CD4-positive, alpha-beta T cell (primary cell): ENCODE measurements at regions of chr12 and their contacts with region 1.

Region 1: DNA sequence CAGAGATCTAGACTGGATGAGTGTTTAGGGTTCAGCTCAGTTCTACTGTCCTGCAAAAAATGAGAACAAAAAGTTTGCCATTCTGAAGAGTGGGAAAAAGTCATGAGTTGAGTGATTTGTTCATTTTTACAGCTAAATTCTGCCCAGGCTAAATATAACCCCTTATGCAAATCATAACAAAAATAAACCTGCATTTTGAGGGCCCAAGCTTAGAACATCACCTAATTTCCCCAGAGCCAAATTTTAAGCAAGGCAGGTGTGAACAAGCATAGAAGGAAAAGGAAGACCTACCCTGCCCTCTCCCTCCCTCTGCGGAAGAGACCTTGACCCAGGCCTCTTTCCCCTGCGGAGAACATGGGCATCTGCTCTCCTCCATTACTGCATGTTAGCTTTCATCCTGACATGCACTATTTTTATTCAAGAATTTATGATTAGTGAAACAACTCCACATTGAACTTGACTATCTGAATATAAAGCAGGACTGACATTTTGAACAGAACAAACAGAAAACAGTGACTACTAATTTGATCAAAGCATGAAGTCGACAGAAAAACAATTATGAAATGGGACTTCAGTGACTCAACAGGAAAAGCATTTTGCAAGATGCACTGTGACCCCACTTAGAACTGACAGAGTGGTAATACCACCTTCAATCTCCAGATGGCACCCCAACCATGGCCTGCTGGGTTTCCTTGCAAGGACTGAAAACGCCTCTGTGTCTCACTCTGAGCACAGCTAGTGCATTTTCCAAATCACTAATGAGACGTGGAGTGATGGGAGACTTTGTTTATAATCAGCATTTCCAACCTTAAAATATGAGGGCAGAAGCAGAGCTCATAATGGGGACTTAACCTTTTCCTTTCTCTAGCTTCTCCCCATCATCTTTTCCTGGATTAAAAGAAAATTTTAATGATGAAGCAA is 30.9 kb upstream of the SELPLG start:
- DNase-seq: peak; percentile 69 to 90 (median 79)
- ATAC-seq: peak; percentile 100
- H3K4me3 ChIP-seq: no peak overlapping the region
- H3K4me3 Mint-ChIP-seq: no peak overlapping the region
- H3K27ac ChIP-seq: no peak overlapping the region
- H3K27ac Mint-ChIP-seq: peak overlapping the region; percentile 72
- H3K4me1 ChIP-seq: peaks cover 6% of the 10 kb centered on the region
- H3K4me1 Mint-ChIP-seq: peaks cover 7% of the 10 kb centered on the region
- H3K27me3 ChIP-seq: no peaks in the 10 kb centered on the region
- H3K27me3 Mint-ChIP-seq: no peaks in the 10 kb centered on the region
- CTCF ChIP-seq: peak; percentile 91

Region 2: DNA sequence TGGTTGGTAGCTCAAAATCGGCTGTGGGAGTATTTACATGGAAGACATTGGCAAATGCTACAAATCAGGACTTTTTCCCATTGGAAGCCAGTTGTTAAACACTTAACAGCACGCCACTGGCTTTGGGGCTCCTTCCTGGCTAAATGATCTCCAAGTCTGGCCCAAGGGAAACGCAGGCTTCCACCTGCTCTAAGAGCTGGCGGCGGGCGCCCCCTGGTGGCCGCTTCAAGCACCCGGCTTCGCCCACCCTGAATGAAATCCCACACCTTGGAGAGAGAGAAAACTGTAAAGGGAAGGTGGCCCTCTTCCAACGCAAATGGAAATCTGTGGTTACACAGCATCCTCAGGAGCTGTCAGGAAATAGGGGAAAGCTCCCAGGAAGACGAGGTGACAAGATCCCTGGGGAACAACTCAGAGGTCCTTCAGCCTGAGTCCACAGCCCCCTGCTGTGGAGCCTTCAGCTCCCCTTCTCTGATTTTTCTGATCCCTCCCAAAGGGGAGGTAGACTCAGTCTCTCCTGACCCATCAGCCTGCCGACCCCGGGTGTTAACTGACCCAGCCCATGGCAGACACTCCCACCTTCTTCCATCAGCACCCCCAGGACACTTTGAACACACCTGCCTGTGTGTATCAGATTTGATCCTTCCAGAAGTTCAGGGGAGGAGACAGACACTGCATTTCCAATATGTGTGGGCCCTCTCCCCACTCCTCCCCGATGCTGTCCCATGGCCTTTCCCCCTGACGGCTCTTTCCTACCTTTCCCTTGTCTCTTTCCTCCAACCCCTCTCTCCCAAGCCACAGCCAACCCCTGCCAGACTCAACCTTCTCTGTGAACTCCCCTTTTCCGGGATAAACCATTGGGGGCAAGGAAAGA is 46.3 kb before region 1 on chr12:
- CTCF ChIA-PET with region 1: interaction called, 27 read pairs
- POLR2A ChIA-PET with region 1: interaction called, 12 read pairs
- intact Hi-C with region 1: no loop called
- DNase-seq: peak; percentile 61 to 89 (median 72)
- ATAC-seq: peak; percentile 54
- H3K4me3 ChIP-seq: no peak overlapping the region
- H3K4me3 Mint-ChIP-seq: peak overlapping the region; percentile 30
- H3K27ac ChIP-seq: peak overlapping the region; percentile 49 to 80
- H3K27ac Mint-ChIP-seq: peak overlapping the region; percentile 84
- H3K4me1 ChIP-seq: peaks cover 63% of the 10 kb centered on the region
- H3K4me1 Mint-ChIP-seq: peaks cover 59% of the 10 kb centered on the region
- H3K27me3 ChIP-seq: no peaks in the 10 kb centered on the region
- H3K27me3 Mint-ChIP-seq: no peaks in the 10 kb centered on the region
- CTCF ChIP-seq: peak; percentile 98

Region 3: GRCh38 chr12:108643941-108644810 is 20.4 kb before region 1 on chr12:
- CTCF ChIA-PET with region 1: interaction called, 10 read pairs
- POLR2A ChIA-PET with region 1: interaction called, 8 read pairs
- intact Hi-C with region 1: no loop called
- DNase-seq: no peak
- ATAC-seq: no peak
- H3K4me3 ChIP-seq: no peak overlapping the region
- H3K4me3 Mint-ChIP-seq: no peak overlapping the region
- H3K27ac ChIP-seq: no peak overlapping the region
- H3K27ac Mint-ChIP-seq: no peak overlapping the region
- H3K4me1 ChIP-seq: peaks cover 36% of the 10 kb centered on the region
- H3K4me1 Mint-ChIP-seq: peaks cover 31% of the 10 kb centered on the region
- H3K27me3 ChIP-seq: no peaks in the 10 kb centered on the region
- H3K27me3 Mint-ChIP-seq: no peaks in the 10 kb centered on the region
- CTCF ChIP-seq: no peak

Region 4: GRCh38 chr12:108691175-108691997 is 26.8 kb after region 1 on chr12:
- CTCF ChIA-PET with region 1: interaction called, 11 read pairs
- POLR2A ChIA-PET with region 1: interaction called, 3 read pairs
- intact Hi-C with region 1: no loop called
- DNase-seq: peak; percentile 17 to 87 (median 58)
- ATAC-seq: peak; percentile 74
- H3K4me3 ChIP-seq: peak overlapping the region; percentile 32
- H3K4me3 Mint-ChIP-seq: peak overlapping the region; percentile 70
- H3K27ac ChIP-seq: peak overlapping the region in 1 of 2 donors; percentile 50
- H3K27ac Mint-ChIP-seq: peak overlapping the region; percentile 77
- H3K4me1 ChIP-seq: peaks cover 41% of the 10 kb centered on the region
- H3K4me1 Mint-ChIP-seq: peaks cover 58% of the 10 kb centered on the region
- H3K27me3 ChIP-seq: no peaks in the 10 kb centered on the region
- H3K27me3 Mint-ChIP-seq: no peaks in the 10 kb centered on the region
- CTCF ChIP-seq: no peak

Region 5: DNA sequence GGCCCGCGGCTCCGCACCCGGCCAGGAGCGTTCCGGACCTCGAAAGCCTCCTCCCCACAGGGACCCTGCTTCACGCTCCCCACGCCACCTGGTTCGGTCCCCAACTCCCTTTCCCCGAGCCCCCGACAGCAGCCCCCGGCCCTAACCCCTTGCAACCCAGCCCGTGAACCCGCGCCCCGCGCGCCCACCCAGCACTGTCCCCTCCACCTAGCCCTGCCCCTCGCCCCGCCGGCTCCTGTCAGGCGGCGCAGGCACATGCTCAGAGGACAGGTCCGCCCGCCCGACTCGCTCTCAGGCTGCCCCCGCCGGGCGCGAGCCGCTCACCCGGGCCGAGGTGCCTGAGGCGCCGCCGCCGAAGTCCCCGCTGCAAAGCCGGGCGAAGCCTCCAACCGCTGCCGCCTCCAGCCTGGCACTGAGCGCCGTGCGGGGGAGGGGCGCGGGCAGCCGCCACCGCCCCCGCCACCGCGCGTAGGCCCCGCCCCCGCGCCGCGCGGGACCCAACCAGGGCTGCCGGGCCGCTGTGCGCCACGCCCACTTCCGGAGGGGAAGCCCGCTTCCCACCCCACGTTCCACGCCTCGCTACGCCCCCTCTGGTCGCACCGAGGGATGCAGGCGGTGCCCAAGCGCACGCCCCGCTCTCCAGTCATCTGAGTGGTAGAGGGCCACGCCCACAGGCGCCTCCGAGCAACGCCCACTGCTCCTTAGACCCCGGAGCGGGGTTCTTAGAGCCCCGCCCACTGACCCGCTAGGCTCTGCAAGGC is 66.7 kb after region 1 on chr12 and contains the start of gene CORO1C:
- CTCF ChIA-PET with region 1: interaction called, 4 read pairs
- POLR2A ChIA-PET with region 1: no interaction called
- intact Hi-C with region 1: loop called in 1 of 2 experiments (anchors 5 kb)
- DNase-seq: peak; percentile 88 to 99 (median 92)
- ATAC-seq: peak; percentile 73
- H3K4me3 ChIP-seq: peak within 1 kb of the TSS; percentile 93
- H3K4me3 Mint-ChIP-seq: peak within 1 kb of the TSS; percentile 97
- H3K27ac ChIP-seq: peak within 1 kb of the TSS; percentile 75 to 90
- H3K27ac Mint-ChIP-seq: peak within 1 kb of the TSS; percentile 88
- H3K4me1 ChIP-seq: peaks cover 26% of the 10 kb centered on the region
- H3K4me1 Mint-ChIP-seq: peaks cover 26% of the 10 kb centered on the region
- H3K27me3 ChIP-seq: no peaks in the 10 kb centered on the region
- H3K27me3 Mint-ChIP-seq: no peaks in the 10 kb centered on the region
- CTCF ChIP-seq: peak; percentile 75
- total RNA-seq, gene CORO1C: 6.7 to 7.4 TPM

Region 6: DNA sequence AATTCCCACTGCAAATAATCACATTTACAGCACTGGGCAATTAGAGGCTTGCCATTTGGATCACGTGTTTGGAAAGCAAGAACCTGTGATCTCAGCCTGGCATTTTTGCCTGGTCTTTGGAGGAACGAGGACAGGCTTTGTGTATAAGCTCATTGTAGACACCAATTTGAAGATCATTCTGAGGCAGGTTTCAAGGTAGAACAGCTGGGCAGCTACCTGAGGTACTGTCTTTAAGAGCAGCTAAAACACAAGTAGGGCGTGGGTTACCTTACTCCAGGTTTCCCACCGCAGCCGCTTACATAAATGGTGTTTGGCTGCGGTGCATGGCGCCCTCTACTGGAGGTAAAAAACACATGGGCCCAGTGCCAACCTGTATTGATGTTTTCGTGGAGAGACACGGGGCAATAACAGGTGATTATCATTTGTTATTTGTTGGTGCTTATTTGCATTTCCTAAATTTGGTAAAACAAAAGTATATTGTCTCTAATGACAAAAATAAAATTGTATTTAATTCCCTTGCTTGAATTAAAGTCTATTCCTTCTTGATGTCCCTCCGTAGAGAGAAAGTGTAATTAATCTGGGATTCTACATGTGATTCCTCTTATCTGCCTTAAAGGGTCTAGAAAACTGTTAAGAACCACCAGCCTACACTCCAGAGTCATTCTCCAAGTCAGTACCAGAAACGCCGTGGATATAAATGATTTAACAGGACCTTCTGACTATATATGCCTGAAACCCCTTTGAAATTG is 286.6 kb after region 1 on chr12:
- CTCF ChIA-PET with region 1: interaction called, 8 read pairs
- POLR2A ChIA-PET with region 1: no interaction called
- intact Hi-C with region 1: loop called (anchors 2 kb)
- DNase-seq: peak; percentile 47 to 86 (median 59)
- ATAC-seq: peak; percentile 95
- H3K4me3 ChIP-seq: no peak overlapping the region
- H3K4me3 Mint-ChIP-seq: no peak overlapping the region
- H3K27ac ChIP-seq: no peak overlapping the region
- H3K27ac Mint-ChIP-seq: no peak overlapping the region
- H3K4me1 ChIP-seq: peaks cover 4% of the 10 kb centered on the region
- H3K4me1 Mint-ChIP-seq: no peaks in the 10 kb centered on the region
- H3K27me3 ChIP-seq: peaks cover 0 to 3% of the 10 kb centered on the region in 2 experiments
- H3K27me3 Mint-ChIP-seq: peaks cover 24% of the 10 kb centered on the region
- CTCF ChIP-seq: peak; percentile 78